Naive thymus-derived CD4-positive, alpha-beta T cell (primary cell): ENCODE measurements at regions of chr13 and their contacts with region 1.

Region 1: DNA sequence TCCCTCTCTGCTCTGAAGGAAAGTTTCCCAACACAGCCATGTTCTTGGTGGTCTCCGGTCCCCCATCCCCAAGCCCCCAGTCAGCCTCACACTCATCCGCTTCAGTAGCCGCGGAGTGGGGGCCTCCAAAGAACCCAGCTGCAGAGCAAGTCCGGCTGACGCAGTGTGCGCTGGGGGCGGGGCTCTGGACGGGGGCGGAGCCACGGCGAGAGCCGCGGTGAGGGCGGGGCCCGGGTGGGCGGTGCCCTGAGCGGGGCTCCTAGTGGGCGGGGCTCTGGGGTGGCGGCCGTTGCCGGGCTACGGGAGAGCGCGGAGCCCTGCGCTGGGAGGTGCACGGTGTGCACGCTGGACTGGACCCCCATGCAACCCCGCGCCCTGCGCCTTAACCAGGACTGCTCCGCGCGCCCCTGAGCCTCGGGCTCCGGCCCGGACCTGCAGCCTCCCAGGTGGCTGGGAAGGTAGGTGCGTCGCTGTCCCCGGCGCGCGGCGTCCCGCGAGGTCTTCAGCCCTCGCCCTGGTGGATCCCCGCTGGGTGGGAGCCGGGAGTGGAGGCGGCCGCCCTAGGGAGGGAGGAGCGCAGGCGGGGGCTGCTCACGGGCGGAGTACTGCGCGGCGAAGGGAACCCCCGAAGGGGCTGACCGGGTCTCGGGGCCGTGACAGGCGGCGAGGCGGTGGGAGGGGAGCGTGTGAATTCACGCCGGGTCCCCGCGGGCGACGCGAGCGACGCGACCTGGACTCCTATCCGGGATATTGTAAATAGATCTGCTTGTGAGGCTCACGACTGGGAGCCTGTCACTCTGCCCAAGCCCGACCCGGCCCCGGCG is 9.1 kb downstream of the TNFRSF19 start:
- DNase-seq: peak; percentile 76 to 96 (median 87)
- ATAC-seq: peak; percentile 99
- H3K4me3 ChIP-seq: peak overlapping the region; percentile 79
- H3K4me3 Mint-ChIP-seq: peak overlapping the region; percentile 43 to 89 (median 81)
- H3K27ac ChIP-seq: peak overlapping the region; percentile 67
- H3K27ac Mint-ChIP-seq: peak overlapping the region in 3 of 9 donors; percentile 46 to 80 (median 65)
- H3K4me1 ChIP-seq: peaks cover 0 to 4% of the 10 kb centered on the region in 2 donors
- H3K4me1 Mint-ChIP-seq: peaks cover 10 to 22% (median 18%) of the 10 kb centered on the region in 7 donors
- H3K27me3 ChIP-seq: peaks cover 0 to 11% of the 10 kb centered on the region in 2 donors
- H3K27me3 Mint-ChIP-seq: peaks cover 34 to 72% (median 46%) of the 10 kb centered on the region in 5 donors

Region 2: GRCh38 chr13:21670883-21671619 is 1908.2 kb before region 1 on chr13 and contains the start of gene FGF9:
- CTCF ChIA-PET with region 1: no interaction called
- POLR2A ChIA-PET with region 1: no interaction called
- intact Hi-C with region 1: loop called in 1 of 2 experiments (anchors 5 kb)
- DNase-seq: peak; percentile 76 to 88 (median 86)
- ATAC-seq: peak; percentile 89
- H3K4me3 ChIP-seq: peak within 1 kb of the TSS; percentile 92
- H3K4me3 Mint-ChIP-seq: peak within 1 kb of the TSS; percentile 88 to 98 (median 93)
- H3K27ac ChIP-seq: peak within 1 kb of the TSS; percentile 48
- H3K27ac Mint-ChIP-seq: peak within 1 kb of the TSS; percentile 61 to 94 (median 78)
- H3K4me1 ChIP-seq: peaks cover 19 to 32% of the 10 kb centered on the region in 2 donors
- H3K4me1 Mint-ChIP-seq: peaks cover 27 to 45% (median 44%) of the 10 kb centered on the region in 7 donors
- H3K27me3 ChIP-seq: peaks cover 0 to 4% of the 10 kb centered on the region in 2 donors
- H3K27me3 Mint-ChIP-seq: peaks cover 5 to 77% (median 20%) of the 10 kb centered on the region in 5 donors
- total RNA-seq, gene FGF9: 0.19 to 5.6 (median 2.0) TPM

Region 3: DNA sequence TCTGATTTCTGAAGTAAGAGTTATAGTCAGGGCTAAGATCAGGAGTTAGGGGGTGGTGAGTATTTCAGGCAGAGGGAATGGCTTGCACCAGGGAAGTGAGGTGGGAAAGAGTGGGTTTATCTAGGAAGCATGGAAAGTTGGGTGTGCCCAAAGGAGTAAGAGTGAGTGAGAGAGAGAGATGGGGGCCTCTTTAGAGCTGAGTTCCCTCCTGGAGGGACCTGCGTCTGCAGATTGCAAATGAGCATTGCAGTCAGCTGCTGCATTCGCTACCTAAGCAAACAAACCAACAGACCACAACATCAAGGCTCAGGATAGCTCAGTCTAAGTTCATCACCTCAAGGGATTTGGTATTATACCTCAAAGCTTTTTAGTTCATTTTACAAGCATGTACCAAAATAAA is 1502.6 kb before region 1 on chr13:
- CTCF ChIA-PET with region 1: no interaction called
- POLR2A ChIA-PET with region 1: no interaction called
- intact Hi-C with region 1: no loop called
- DNase-seq: peak in 2 of 9 donors; percentile 25 to 34
- ATAC-seq: peak; percentile 65
- H3K4me3 ChIP-seq: no peak overlapping the region
- H3K4me3 Mint-ChIP-seq: peak overlapping the region in 2 of 10 donors; percentile 3 to 15
- H3K27ac ChIP-seq: no peak overlapping the region
- H3K27ac Mint-ChIP-seq: peak overlapping the region in 5 of 9 donors; percentile 17 to 85 (median 44)
- H3K4me1 ChIP-seq: peaks cover 0 to 4% of the 10 kb centered on the region in 2 donors
- H3K4me1 Mint-ChIP-seq: peaks cover 8 to 34% (median 25%) of the 10 kb centered on the region in 7 donors
- H3K27me3 ChIP-seq: no peaks in the 10 kb centered on the region
- H3K27me3 Mint-ChIP-seq: peaks cover 0 to 2% (median 0%) of the 10 kb centered on the region in 5 donors

Region 4: GRCh38 chr13:23741879-23742510 is 162.7 kb after region 1 on chr13:
- CTCF ChIA-PET with region 1: no interaction called
- POLR2A ChIA-PET with region 1: no interaction called
- intact Hi-C with region 1: loop called in 1 of 2 experiments (anchors 2 kb)
- DNase-seq: no peak
- ATAC-seq: no peak
- H3K4me3 ChIP-seq: no peak overlapping the region
- H3K4me3 Mint-ChIP-seq: no peak overlapping the region
- H3K27ac ChIP-seq: no peak overlapping the region
- H3K27ac Mint-ChIP-seq: no peak overlapping the region
- H3K4me1 ChIP-seq: peaks cover 0 to 21% of the 10 kb centered on the region in 2 donors
- H3K4me1 Mint-ChIP-seq: peaks cover 17 to 35% (median 31%) of the 10 kb centered on the region in 7 donors
- H3K27me3 ChIP-seq: no peaks in the 10 kb centered on the region
- H3K27me3 Mint-ChIP-seq: peaks cover 0 to 41% (median 0%) of the 10 kb centered on the region in 5 donors

Region 5: DNA sequence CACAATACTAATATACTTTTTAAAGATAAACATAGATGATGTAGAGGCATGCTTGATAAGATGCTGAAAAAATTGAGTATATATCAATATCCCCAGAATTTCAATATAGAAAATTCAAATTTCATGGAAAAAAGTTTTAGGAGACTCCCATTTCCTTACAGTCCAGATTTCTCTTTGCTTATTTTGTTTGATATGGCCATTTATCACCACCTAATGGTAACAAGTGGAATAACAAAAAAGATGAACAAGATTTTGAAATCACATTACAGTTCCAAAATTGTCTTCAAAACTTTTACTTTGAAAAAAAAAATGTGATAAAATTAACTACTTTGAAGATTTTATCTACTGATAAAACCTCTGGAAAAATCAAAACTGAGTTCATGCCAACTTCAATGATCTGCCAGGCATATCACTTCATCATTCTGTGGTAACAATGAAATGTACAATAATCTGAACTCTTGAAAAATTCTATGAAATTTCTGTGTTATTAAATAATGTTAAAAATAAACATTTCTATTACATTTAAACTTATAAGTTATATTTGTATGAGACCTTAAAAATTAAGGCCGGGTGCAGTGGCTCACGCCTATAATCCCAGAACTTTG is 292.4 kb after region 1 on chr13:
- CTCF ChIA-PET with region 1: no interaction called
- POLR2A ChIA-PET with region 1: no interaction called
- intact Hi-C with region 1: loop called (anchors 1 kb)
- DNase-seq: peak in 4 of 9 donors; percentile 11 to 30 (median 23)
- ATAC-seq: no peak
- H3K4me3 ChIP-seq: no peak overlapping the region
- H3K4me3 Mint-ChIP-seq: no peak overlapping the region
- H3K27ac ChIP-seq: no peak overlapping the region
- H3K27ac Mint-ChIP-seq: no peak overlapping the region
- H3K4me1 ChIP-seq: no peaks in the 10 kb centered on the region
- H3K4me1 Mint-ChIP-seq: no peaks in the 10 kb centered on the region
- H3K27me3 ChIP-seq: no peaks in the 10 kb centered on the region
- H3K27me3 Mint-ChIP-seq: no peaks in the 10 kb centered on the region

Region 6: GRCh38 chr13:23960566-23961156 is 381.4 kb after region 1 on chr13:
- CTCF ChIA-PET with region 1: no interaction called
- POLR2A ChIA-PET with region 1: no interaction called
- intact Hi-C with region 1: loop called in 1 of 2 experiments (anchors 5 kb)
- DNase-seq: peak in 2 of 9 donors; percentile 7 to 8
- ATAC-seq: peak; percentile 41
- H3K4me3 ChIP-seq: no peak overlapping the region
- H3K4me3 Mint-ChIP-seq: no peak overlapping the region
- H3K27ac ChIP-seq: no peak overlapping the region
- H3K27ac Mint-ChIP-seq: no peak overlapping the region
- H3K4me1 ChIP-seq: no peaks in the 10 kb centered on the region
- H3K4me1 Mint-ChIP-seq: peaks cover 0 to 47% (median 0%) of the 10 kb centered on the region in 7 donors
- H3K27me3 ChIP-seq: no peaks in the 10 kb centered on the region
- H3K27me3 Mint-ChIP-seq: peaks cover 0 to 12% (median 0%) of the 10 kb centered on the region in 5 donors

Region 7: GRCh38 chr13:24254146-24254841 is 675.0 kb after region 1 on chr13:
- CTCF ChIA-PET with region 1: no interaction called
- POLR2A ChIA-PET with region 1: no interaction called
- intact Hi-C with region 1: loop called in 1 of 2 experiments (anchors 1 kb)
- DNase-seq: peak in 7 of 9 donors; percentile 59 to 80 (median 68)
- ATAC-seq: peak; percentile 76
- H3K4me3 ChIP-seq: peak overlapping the region; percentile 82
- H3K4me3 Mint-ChIP-seq: peak overlapping the region; percentile 86 to 96 (median 92)
- H3K27ac ChIP-seq: peak overlapping the region; percentile 90
- H3K27ac Mint-ChIP-seq: peak overlapping the region; percentile 86 to 99 (median 95)
- H3K4me1 ChIP-seq: peaks cover 58 to 75% of the 10 kb centered on the region in 2 donors
- H3K4me1 Mint-ChIP-seq: peaks cover 44 to 96% (median 91%) of the 10 kb centered on the region in 7 donors
- H3K27me3 ChIP-seq: no peaks in the 10 kb centered on the region
- H3K27me3 Mint-ChIP-seq: no peaks in the 10 kb centered on the region